ENCODE measurements at regions of chr12 and their contacts with region 1.

Region 1: GRCh38 chr12:121296618-121297434 is at the start of gene CAMKK2:
- DNase-seq: peak; percentile 94
- ATAC-seq: peak; percentile 87
- H3K4me3 Mint-ChIP-seq: peak within 1 kb of the TSS; percentile 87
- H3K27ac Mint-ChIP-seq: peak within 1 kb of the TSS; percentile 73
- H3K4me1 Mint-ChIP-seq: peaks cover 21% of the 10 kb centered on the region
- H3K27me3 Mint-ChIP-seq: no peaks in the 10 kb centered on the region
- CTCF ChIP-seq: no peak
- total RNA-seq, gene CAMKK2: 19.3 and 20.5 TPM in 2 replicates

Region 2: DNA sequence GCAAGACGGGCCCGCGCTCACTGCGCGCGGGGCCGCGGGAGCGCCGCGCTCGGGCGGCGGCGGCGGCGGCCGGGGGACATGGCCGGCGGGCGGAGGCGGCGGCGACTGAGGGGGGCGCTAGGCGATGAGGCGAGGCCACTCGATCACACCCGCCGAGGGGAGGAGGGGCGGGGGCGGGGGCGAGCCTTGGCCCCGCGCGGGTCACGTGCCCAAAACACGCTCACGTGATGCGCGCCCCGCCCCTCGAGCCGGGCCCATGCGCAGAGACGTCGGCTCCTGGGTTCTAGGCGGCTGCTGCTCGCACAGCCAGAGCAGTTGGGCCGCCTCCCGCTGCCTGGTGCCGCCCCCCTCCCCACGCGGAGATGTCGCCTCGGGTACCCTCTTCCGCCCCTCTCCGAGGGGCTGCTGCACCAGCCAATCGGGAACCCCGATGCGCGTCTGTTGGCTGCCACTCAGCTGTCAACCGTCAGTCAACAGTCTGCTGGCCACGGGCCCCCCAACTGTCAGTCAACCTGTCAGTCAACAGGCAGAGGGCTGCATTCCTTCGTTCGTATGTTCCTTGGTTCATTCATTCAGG is 392.5 kb before region 1 on chr12 and contains the start of gene SPPL3:
- CTCF ChIA-PET with region 1: no interaction called
- POLR2A ChIA-PET with region 1: no interaction called
- intact Hi-C with region 1: no loop called
- DNase-seq: peak; percentile 96
- ATAC-seq: peak; percentile 80
- H3K4me3 Mint-ChIP-seq: peak within 1 kb of the TSS; percentile 97
- H3K27ac Mint-ChIP-seq: peak within 1 kb of the TSS; percentile 91
- H3K4me1 Mint-ChIP-seq: peaks cover 30% of the 10 kb centered on the region
- H3K27me3 Mint-ChIP-seq: no peaks in the 10 kb centered on the region
- CTCF ChIP-seq: no peak
- total RNA-seq, gene SPPL3: 39.9 and 40.3 TPM in 2 replicates

Region 3: DNA sequence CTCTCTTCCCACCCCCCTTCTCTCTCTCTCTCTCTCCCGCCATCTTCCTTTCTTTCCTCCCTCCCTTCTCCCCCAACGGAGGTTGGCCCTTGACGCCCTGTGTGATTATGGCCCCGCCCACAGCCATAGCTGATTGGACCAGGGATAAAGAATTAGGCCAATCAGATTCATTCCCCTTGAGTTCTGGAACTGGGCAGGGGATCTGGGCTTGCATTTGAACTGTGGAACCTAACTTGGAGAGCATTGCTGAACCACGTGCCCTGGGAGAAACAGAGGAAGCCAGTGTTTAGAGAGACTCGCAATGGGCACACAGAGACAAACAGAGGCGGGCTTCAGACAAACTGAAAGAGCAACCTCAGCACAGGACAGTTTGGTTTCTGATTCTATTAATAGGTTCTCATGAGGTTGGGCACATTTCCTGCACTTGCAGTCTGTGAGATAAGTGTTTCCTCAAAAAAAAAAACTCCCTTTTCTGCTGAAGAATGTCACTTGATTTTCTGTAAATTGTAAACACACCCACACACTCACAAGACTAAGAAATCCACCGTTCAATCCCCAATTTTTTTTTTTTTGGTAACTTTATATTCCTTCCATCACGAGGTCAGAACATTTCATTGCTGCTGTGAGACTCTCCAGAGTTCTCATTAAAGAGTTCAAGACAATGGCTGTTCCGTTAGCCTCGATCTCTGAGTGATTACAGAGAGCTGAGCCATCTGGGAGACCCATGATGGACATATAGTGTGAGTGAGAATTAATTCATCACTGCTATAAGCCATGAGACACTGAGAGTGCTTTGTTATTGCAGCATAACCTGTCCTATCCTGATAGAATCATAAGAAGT is 167.6 kb before region 1 on chr12:
- CTCF ChIA-PET with region 1: no interaction called
- POLR2A ChIA-PET with region 1: no interaction called
- intact Hi-C with region 1: loop called (anchors 5 kb)
- DNase-seq: peak; percentile 65
- ATAC-seq: peak; percentile 87
- H3K4me3 Mint-ChIP-seq: peak overlapping the region; percentile 87
- H3K27ac Mint-ChIP-seq: peak overlapping the region; percentile 99
- H3K4me1 Mint-ChIP-seq: peaks cover 68% of the 10 kb centered on the region
- H3K27me3 Mint-ChIP-seq: no peaks in the 10 kb centered on the region
- CTCF ChIP-seq: no peak

Region 4: GRCh38 chr12:121190523-121191031 is 106.2 kb before region 1 on chr12:
- CTCF ChIA-PET with region 1: no interaction called
- POLR2A ChIA-PET with region 1: no interaction called
- intact Hi-C with region 1: no loop called
- DNase-seq: no peak
- ATAC-seq: peak; percentile 68
- H3K4me3 Mint-ChIP-seq: no peak overlapping the region
- H3K27ac Mint-ChIP-seq: no peak overlapping the region
- H3K4me1 Mint-ChIP-seq: peaks cover 14% of the 10 kb centered on the region
- H3K27me3 Mint-ChIP-seq: no peaks in the 10 kb centered on the region
- CTCF ChIP-seq: no peak

Region 5: DNA sequence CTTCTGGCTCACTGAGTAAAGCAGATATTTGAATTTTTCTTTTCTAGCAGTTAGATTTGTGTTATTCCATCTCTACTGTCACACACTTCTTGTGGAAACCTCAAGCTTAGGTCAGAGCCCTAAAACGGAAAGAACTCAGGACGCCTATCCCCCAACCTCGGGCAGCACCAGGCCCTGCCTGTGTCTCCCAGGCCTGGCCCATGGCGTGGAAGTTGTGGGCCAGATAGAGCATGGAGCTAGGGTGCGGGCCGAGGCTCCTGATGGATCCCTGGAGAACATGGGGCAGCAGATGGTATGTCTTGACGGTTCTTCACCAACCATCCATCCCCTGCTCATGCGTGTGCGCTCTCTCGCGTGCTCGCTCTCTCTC is 66.3 kb before region 1 on chr12:
- CTCF ChIA-PET with region 1: no interaction called
- POLR2A ChIA-PET with region 1: no interaction called
- intact Hi-C with region 1: loop called (anchors 5 kb)
- DNase-seq: no peak
- ATAC-seq: no peak
- H3K4me3 Mint-ChIP-seq: no peak overlapping the region
- H3K27ac Mint-ChIP-seq: no peak overlapping the region
- H3K4me1 Mint-ChIP-seq: peaks cover 16% of the 10 kb centered on the region
- H3K27me3 Mint-ChIP-seq: no peaks in the 10 kb centered on the region
- CTCF ChIP-seq: no peak

Region 6: GRCh38 chr12:121277374-121277759 is 19.5 kb before region 1 on chr12:
- CTCF ChIA-PET with region 1: no interaction called
- POLR2A ChIA-PET with region 1: interaction called, 6 read pairs
- intact Hi-C with region 1: loop called (anchors 2 kb)
- DNase-seq: no peak
- ATAC-seq: peak; percentile 20
- H3K4me3 Mint-ChIP-seq: peak overlapping the region; percentile 12
- H3K27ac Mint-ChIP-seq: peak overlapping the region; percentile 85
- H3K4me1 Mint-ChIP-seq: peaks cover 11% of the 10 kb centered on the region
- H3K27me3 Mint-ChIP-seq: no peaks in the 10 kb centered on the region
- CTCF ChIP-seq: no peak